Naive thymus-derived CD4-positive, alpha-beta T cell (primary cell): ENCODE measurements at regions of chr16 and their contacts with region 1.

Region 1: GRCh38 chr16:67537270-67537635 is 8.6 kb downstream of the RIPOR1 start:
- DNase-seq: peak in 2 of 9 donors; percentile 58 to 69
- ATAC-seq: peak; percentile 63
- H3K4me3 ChIP-seq: peak overlapping the region; percentile 68
- H3K4me3 Mint-ChIP-seq: peak overlapping the region; percentile 68 to 91 (median 85)
- H3K27ac ChIP-seq: peak overlapping the region; percentile 82
- H3K27ac Mint-ChIP-seq: peak overlapping the region; percentile 54 to 91 (median 82)
- H3K4me1 ChIP-seq: peaks cover 6% of the 10 kb centered on the region in 2 donors
- H3K4me1 Mint-ChIP-seq: peaks cover 29 to 51% (median 42%) of the 10 kb centered on the region in 7 donors
- H3K27me3 ChIP-seq: no peaks in the 10 kb centered on the region
- H3K27me3 Mint-ChIP-seq: peaks cover 0 to 42% (median 0%) of the 10 kb centered on the region in 5 donors

Region 2: GRCh38 chr16:67499106-67499505 is 38.1 kb before region 1 on chr16:
- CTCF ChIA-PET with region 1: no interaction called
- POLR2A ChIA-PET with region 1: interaction called, 3 read pairs
- intact Hi-C with region 1: loop called in 1 of 2 experiments (anchors 1 kb)
- DNase-seq: no peak
- ATAC-seq: no peak
- H3K4me3 ChIP-seq: no peak overlapping the region
- H3K4me3 Mint-ChIP-seq: no peak overlapping the region
- H3K27ac ChIP-seq: no peak overlapping the region
- H3K27ac Mint-ChIP-seq: peak overlapping the region in 7 of 9 donors; percentile 44 to 93 (median 69)
- H3K4me1 ChIP-seq: peaks cover 12 to 15% of the 10 kb centered on the region in 2 donors
- H3K4me1 Mint-ChIP-seq: peaks cover 15 to 29% (median 20%) of the 10 kb centered on the region in 7 donors
- H3K27me3 ChIP-seq: no peaks in the 10 kb centered on the region
- H3K27me3 Mint-ChIP-seq: no peaks in the 10 kb centered on the region